Heart right ventricle (tissue), 16 donors: ENCODE measurements at regions of chr1 and their contacts with region 1.

Region 1: DNA sequence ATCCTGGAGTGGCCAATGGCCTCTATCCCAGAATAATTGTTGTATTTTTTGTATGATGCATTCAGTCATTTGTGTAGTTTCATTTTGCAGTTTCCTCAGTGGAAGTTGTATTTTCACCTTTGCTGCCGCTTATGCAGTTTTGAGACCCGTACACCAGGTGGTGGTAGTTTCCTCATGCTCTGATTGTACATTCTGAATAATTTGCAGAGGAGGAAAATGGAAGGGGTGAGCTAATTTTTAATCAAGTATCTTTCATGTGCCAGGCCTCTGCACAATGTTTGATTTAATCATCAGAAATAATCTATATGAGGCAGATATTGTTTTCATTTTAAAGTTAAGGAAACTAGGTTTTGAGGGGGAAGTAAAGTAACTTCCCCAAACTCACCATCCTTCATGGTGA is 29.5 kb downstream of the HLX start:
- DNase-seq: no peak
- ATAC-seq: peak in 1 of 8 donors; percentile 20
- H3K4me3 ChIP-seq: no peak overlapping the region
- H3K27ac ChIP-seq: no peak overlapping the region
- H3K4me1 ChIP-seq: peaks cover 0 to 9% (median 0%) of the 10 kb centered on the region in 9 donors
- H3K27me3 ChIP-seq: peaks cover 0 to 5% (median 0%) of the 10 kb centered on the region in 7 donors
- CTCF ChIP-seq: peak; percentile 41 to 77 (median 63)

Region 2: DNA sequence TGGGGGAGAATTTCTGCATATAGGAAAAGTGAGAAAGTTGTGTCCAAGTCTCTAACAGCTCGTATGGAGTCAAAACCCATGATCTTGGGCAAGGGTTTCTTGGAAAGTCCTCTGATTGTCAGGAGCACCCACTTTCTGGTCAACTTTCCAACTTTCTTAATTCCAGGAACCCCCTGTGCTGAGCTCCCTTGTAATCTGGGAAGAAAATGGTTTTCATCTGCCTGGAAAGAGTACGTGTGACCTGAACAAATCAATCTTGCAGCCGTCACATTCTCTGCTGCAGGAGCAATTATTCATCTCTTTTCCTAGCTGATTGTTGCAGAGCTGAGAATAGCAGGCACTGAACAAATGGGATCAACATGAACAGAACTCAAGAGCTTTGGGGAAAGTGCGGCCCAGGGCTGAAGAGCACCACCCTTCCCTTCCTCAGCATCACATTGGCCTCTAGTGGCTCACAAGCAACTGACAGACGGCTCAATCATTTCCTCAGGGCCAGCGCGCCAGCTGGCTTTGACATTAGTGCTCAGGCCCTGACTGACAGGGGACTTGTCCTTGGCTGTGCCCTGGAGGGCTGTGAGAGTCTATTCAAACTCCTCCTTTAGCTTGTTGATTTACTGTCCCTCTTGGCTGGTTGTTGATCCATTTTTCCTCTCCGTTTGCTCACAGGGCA is 265.7 kb after region 1 on chr1:
- intact Hi-C with region 1: loop called in 6 of 10 experiments (anchors 2 to 10 kb)
- DNase-seq: peak; percentile 79 to 82
- ATAC-seq: peak; percentile 97 to 99 (median 99)
- H3K4me3 ChIP-seq: no peak overlapping the region
- H3K27ac ChIP-seq: peak overlapping the region in 5 of 10 donors; percentile 8 to 49 (median 26)
- H3K4me1 ChIP-seq: peaks cover 4 to 15% (median 11%) of the 10 kb centered on the region in 9 donors
- H3K27me3 ChIP-seq: no peaks in the 10 kb centered on the region
- CTCF ChIP-seq: peak; percentile 36 to 69 (median 56)

Region 3: DNA sequence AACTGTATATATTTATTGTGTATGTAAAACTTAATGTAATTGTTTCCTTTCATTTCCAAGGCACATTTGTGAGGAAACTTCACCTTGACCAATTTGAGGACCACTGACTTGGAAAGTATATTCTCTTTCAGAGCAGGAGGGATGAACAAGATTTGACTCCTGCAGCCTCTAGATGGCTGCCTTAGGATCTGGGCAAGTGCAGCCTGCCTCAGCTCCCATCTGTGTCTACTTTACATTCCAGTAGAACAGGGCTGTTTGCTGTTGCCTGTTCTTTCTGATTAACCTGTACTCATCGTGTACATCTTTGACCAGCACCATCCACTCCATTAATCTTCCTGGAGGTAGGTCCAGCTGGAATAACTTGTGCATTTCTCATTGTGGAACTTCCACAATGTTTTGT is 283.3 kb after region 1 on chr1:
- intact Hi-C with region 1: loop called in 1 of 10 experiments (anchors 10 kb)
- DNase-seq: no peak
- ATAC-seq: no peak
- H3K4me3 ChIP-seq: no peak overlapping the region
- H3K27ac ChIP-seq: no peak overlapping the region
- H3K4me1 ChIP-seq: peaks cover 0 to 15% (median 0%) of the 10 kb centered on the region in 9 donors
- H3K27me3 ChIP-seq: no peaks in the 10 kb centered on the region
- CTCF ChIP-seq: no peak

Region 4: DNA sequence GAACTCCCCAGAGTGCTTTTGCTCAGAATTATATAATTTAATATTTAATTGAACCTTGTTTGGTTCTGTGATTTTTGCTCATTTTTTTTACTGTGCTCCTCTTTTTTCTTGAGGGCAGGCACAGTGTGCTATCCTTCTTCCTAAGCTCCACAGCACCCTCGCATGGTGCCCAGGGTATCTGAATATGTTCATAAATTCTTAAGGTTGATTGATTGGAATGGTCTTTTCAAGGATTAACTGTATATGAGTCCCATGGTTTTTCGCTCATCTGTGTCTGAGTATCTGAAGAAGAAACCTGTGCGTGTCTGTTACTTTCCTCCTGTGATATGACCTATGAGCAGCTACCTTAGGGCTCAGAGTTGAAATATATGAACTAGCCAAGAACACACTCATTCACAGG is 364.2 kb after region 1 on chr1:
- intact Hi-C with region 1: loop called in 5 of 10 experiments (anchors 5 to 10 kb)
- DNase-seq: no peak
- ATAC-seq: peak in 1 of 8 donors; percentile 49
- H3K4me3 ChIP-seq: no peak overlapping the region
- H3K27ac ChIP-seq: no peak overlapping the region
- H3K4me1 ChIP-seq: peaks cover 0 to 2% (median 0%) of the 10 kb centered on the region in 9 donors
- H3K27me3 ChIP-seq: no peaks in the 10 kb centered on the region
- CTCF ChIP-seq: peak in 5 of 9 donors; percentile 8 to 51 (median 48)

Region 5: DNA sequence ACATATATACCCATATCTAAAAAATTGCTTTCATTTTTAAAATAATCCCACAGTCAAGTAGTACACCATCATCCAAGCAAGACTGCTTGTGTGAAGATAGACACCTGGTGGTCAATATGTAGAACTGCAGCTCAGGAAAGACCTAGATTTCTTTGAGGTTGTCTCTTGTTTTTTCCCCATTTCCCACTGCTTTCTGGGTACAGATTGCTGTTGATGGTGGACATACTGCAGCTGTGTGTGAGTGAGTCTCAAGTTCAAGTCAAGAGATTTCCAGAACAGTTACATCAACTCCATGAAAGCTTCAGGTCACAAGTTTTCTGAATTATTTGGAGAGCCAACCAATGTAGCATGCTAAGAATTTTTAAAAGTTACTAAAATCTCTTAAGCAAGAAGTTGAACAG is 526.7 kb after region 1 on chr1:
- intact Hi-C with region 1: loop called in 3 of 10 experiments (anchors 10 kb)
- DNase-seq: no peak
- ATAC-seq: peak in 7 of 8 donors; percentile 38 to 83 (median 76)
- H3K4me3 ChIP-seq: no peak overlapping the region
- H3K27ac ChIP-seq: peak overlapping the region in 2 of 10 donors; percentile 23 to 38
- H3K4me1 ChIP-seq: peaks cover 0 to 28% (median 8%) of the 10 kb centered on the region in 9 donors
- H3K27me3 ChIP-seq: no peaks in the 10 kb centered on the region
- CTCF ChIP-seq: peak; percentile 87 to 96 (median 95)